Activated naive CD4-positive, alpha-beta T cell treated with anti-CD3 and anti-CD28 coated beads, Interleukin-2, amount 10 ng/mL, durations not matched to agents 7 days and 5 days (primary cell): ENCODE measurements at regions of chr17 and their contacts with region 1.

Region 1: GRCh38 chr17:36072431-36073121 is 8.5 kb downstream of the CCL18 start:
- DNase-seq: peak; percentile 61
- H3K4me3 Mint-ChIP-seq: no peak overlapping the region
- H3K27ac Mint-ChIP-seq: no peak overlapping the region
- H3K4me1 Mint-ChIP-seq: no peaks in the 10 kb centered on the region
- H3K27me3 Mint-ChIP-seq: peaks cover 31% of the 10 kb centered on the region

Region 2: DNA sequence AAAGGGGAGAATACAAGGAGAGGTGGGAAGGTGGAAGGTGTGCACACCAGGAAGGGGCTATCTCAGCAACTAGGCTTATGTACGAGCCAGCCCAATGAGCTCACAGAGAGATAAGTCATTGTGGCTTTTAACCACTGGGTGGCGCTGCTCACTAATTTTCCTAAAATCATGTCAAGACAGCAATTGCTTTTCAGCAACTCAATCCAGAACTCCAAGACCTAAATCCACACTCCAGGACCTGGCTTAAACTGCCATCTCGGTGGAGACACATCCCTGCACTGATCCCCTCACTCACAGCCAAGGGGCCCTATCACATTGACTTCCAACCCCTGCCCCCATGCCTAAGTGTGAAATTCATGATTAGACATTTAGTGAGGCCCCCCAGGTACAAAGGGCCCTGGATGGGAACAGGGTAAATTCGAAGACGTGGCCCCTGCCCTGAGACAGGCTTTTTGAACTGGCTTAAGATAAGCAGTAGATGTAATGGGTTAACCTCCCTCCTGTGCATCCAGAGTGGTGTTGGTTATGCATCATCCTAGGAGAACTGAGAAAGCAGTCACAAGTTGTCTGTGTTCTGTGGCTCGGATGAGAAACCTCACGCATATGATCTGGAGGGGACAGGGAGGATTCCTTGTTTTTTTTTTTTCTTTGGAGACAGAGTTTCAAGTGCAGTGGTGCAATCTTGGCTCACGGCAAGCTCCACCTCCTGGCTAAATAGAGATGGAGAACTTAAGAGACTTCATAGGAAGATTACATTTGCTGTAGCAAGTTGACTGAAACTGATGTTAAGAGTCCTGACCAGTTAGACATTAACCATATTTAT is 102.8 kb before region 1 on chr17:
- CTCF ChIA-PET with region 1: interaction called, 13 read pairs
- DNase-seq: peak; percentile 82
- H3K4me3 Mint-ChIP-seq: no peak overlapping the region
- H3K27ac Mint-ChIP-seq: no peak overlapping the region
- H3K4me1 Mint-ChIP-seq: no peaks in the 10 kb centered on the region
- H3K27me3 Mint-ChIP-seq: peaks cover 23% of the 10 kb centered on the region

Region 3: GRCh38 chr17:36095992-36096391 is 23.4 kb after region 1 on chr17:
- CTCF ChIA-PET with region 1: no interaction called
- DNase-seq: no peak
- H3K4me3 Mint-ChIP-seq: no peak overlapping the region
- H3K27ac Mint-ChIP-seq: no peak overlapping the region
- H3K4me1 Mint-ChIP-seq: no peaks in the 10 kb centered on the region
- H3K27me3 Mint-ChIP-seq: peaks cover 36% of the 10 kb centered on the region